CD4-positive, alpha-beta memory T cell (primary cell): ENCODE measurements at regions of chr15 and their contacts with region 1.

Region 1: GRCh38 chr15:63212050-63213004 is 22.9 kb downstream of the RAB8B start:
- DNase-seq: peak in 3 of 5 donors; percentile 24 to 38 (median 33)
- H3K4me3 ChIP-seq: no peak overlapping the region
- H3K4me3 Mint-ChIP-seq: peak overlapping the region; percentile 29 to 87 (median 72)
- H3K27ac ChIP-seq: peak overlapping the region; percentile 26
- H3K27ac Mint-ChIP-seq: peak overlapping the region; percentile 67 to 92 (median 88)
- H3K4me1 ChIP-seq: peaks cover 78% of the 10 kb centered on the region
- H3K4me1 Mint-ChIP-seq: peaks cover 59 to 82% (median 69%) of the 10 kb centered on the region in 4 donors
- H3K27me3 ChIP-seq: no peaks in the 10 kb centered on the region
- H3K27me3 Mint-ChIP-seq: no peaks in the 10 kb centered on the region

Region 2: DNA sequence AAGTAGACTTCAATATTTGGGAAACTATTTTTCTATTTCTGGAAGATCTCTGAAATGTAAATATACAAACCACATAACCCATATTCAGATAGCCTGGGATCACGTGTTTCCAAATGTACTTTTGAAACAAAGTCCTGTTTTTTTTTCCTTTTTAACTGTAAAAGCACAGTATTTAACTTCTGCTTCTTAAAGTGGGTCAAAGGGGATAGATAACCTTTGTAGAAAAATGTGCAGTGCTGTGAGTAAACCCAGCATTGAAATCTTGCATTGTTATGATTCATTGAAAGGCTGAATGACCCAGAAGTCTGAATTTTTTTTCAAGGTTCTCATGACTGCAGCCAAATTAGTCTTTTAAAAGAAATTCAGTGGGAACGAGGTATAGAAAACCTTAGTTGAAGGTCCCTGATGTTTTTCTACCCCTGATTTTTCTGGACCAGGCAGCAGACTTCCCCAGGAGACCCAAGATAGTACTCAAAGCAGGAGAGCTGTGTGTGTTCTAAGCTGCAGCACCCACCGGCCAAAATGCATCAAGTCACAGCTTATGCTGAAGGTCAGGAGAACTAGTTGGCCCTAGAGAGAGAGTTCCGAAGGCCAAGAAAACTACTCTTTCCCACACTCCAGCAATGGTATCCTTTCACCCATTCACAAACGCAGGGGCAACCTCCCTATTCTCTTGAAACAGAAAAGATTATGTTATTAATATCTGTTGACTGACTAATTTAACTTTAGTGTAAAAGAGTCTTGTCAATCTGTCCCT is 21.5 kb after region 1 on chr15:
- CTCF ChIA-PET with region 1: interaction called, 3 read pairs
- POLR2A ChIA-PET with region 1: interaction called, 9 read pairs
- intact Hi-C with region 1: loop called (anchors 2 kb)
- DNase-seq: no peak
- H3K4me3 ChIP-seq: no peak overlapping the region
- H3K4me3 Mint-ChIP-seq: peak overlapping the region in 3 of 8 donors; percentile 7 to 52 (median 38)
- H3K27ac ChIP-seq: no peak overlapping the region
- H3K27ac Mint-ChIP-seq: peak overlapping the region in 6 of 7 donors; percentile 42 to 90 (median 82)
- H3K4me1 ChIP-seq: peaks cover 78% of the 10 kb centered on the region
- H3K4me1 Mint-ChIP-seq: peaks cover 53 to 79% (median 63%) of the 10 kb centered on the region in 4 donors
- H3K27me3 ChIP-seq: no peaks in the 10 kb centered on the region
- H3K27me3 Mint-ChIP-seq: no peaks in the 10 kb centered on the region